Activated CD4-positive, alpha-beta T cell treated with anti-CD3 and anti-CD28 coated beads, Interleukin-2, amount 10 ng/mL, durations not matched to agents 7 days and 5 days (primary cell): ENCODE measurements at regions of chr12 and their contacts with region 1.

Region 1: DNA sequence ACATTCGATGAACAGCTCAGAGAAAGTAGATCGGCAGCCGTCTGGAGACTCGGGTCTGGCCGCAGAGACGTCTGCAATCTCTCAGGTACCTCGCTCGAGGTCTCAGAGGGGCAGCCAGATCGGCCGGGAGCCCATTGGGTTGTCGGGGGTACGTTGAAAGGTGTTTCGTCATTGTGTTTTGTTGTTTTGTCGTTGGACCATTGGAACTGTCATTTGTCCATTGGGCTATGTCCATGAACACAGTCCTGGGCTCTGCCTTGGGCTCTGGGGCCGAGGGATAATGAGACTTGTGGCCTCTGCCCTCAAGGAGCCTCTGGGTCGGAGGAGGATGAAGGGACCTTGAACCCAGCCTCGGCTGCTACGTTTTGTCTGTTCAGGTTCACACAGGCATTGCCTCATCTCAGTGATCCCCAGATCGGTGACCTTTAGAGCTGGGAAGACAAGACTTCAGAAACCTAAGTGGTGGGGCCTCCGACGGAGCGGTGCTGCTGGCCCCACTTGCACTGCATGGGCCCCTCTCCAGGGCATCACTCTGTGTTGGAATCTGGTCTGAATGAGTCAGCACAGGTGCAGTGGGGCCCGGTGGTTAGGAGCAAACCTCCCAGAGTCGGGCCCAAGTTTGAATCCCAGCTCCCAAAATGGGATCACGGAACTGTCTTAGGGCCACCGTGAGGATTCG is 23.6 kb upstream of the MLXIP start:
- DNase-seq: no peak
- H3K4me3 Mint-ChIP-seq: no peak overlapping the region
- H3K27ac Mint-ChIP-seq: no peak overlapping the region
- H3K4me1 Mint-ChIP-seq: peaks cover 7% of the 10 kb centered on the region
- H3K27me3 Mint-ChIP-seq: no peaks in the 10 kb centered on the region

Region 2: DNA sequence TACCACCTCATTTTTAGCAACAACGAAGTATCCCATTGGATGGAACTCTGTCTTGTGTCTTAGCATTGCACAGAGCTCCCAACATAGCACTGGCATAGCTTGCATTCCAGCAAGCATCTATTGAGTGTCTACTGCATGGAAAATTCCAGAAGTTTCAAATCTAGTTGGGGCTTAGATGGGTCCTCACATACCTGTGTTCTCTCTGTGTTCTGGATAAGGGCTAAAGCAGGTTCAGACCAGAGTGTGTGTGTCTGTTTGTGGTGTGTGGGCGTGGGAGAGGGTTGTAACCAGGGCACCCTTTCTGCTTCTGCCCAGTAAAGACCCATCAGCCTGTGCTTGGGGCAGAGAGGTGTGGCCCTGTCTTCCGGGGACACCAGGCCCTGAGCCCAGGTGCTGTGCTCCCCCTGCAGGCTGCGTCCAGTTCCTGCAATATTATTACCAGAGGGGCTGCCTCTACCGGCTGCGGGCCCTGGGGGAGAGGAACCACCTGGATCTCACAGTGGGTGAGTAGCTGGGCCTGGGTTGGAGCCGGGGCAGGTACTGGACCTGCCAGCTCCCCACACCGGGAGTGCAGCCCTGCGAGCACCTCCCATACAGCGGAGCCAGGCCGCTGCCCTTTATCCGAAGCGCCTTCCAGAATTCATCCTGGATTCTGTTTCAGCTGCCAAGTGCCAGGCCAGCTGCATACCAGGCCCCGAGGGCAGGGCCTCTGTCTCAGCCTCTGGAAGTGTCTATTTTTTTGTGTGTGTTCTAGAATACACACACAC is 281.8 kb before region 1 on chr12:
- CTCF ChIA-PET with region 1: no interaction called
- POLR2A ChIA-PET with region 1: no interaction called
- DNase-seq: peak; percentile 87
- H3K4me3 Mint-ChIP-seq: no peak overlapping the region
- H3K27ac Mint-ChIP-seq: peak overlapping the region; percentile 81
- H3K4me1 Mint-ChIP-seq: peaks cover 20% of the 10 kb centered on the region
- H3K27me3 Mint-ChIP-seq: no peaks in the 10 kb centered on the region

Region 3: GRCh38 chr12:122087431-122088178 is 32.6 kb after region 1 on chr12:
- CTCF ChIA-PET with region 1: interaction called, 12 read pairs
- POLR2A ChIA-PET with region 1: no interaction called
- DNase-seq: no peak
- H3K4me3 Mint-ChIP-seq: no peak overlapping the region
- H3K27ac Mint-ChIP-seq: no peak overlapping the region
- H3K4me1 Mint-ChIP-seq: peaks cover 74% of the 10 kb centered on the region
- H3K27me3 Mint-ChIP-seq: no peaks in the 10 kb centered on the region

Region 4: DNA sequence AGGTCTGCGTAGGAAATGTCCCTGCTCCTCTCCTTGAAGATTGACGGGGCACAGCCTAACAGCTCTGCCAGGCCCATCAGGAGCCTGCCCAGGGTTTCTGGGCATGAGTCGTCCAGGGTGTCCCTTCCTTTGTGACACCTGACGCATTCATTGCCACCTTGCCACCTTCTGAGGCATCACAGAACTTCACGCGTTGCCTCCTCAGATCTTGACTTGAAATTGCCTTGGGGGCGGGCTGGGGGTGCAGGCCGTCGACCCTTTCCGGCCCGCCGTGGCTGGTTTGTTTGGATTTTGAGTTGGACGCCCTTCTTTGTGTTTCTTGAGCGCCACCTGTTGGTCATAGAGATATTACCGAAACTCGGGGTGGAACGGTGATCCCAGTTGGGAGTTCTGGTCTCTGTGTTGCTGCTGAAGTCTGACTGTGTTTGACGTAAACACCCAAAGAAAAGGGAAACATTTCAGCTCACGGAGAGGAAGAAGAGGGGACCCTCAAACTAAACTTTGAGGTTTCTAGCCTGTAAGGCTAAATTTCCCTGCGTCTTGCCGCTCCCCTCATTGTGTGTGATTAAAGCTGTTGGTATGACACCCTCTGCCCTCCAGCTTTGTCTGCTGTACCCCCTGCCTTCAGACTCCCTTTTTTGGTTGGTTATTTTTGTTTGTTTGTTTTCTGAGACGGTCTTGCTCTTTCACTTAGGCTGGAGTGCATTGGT is 68.2 kb after region 1 on chr12:
- CTCF ChIA-PET with region 1: interaction called, 19 read pairs
- POLR2A ChIA-PET with region 1: interaction called, 3 read pairs
- DNase-seq: peak; percentile 82
- H3K4me3 Mint-ChIP-seq: no peak overlapping the region
- H3K27ac Mint-ChIP-seq: peak overlapping the region; percentile 47
- H3K4me1 Mint-ChIP-seq: peaks cover 25% of the 10 kb centered on the region
- H3K27me3 Mint-ChIP-seq: no peaks in the 10 kb centered on the region

Region 5: GRCh38 chr12:122190842-122191668 is 136.1 kb after region 1 on chr12:
- CTCF ChIA-PET with region 1: interaction called, 13 read pairs
- POLR2A ChIA-PET with region 1: no interaction called
- DNase-seq: peak; percentile 79
- H3K4me3 Mint-ChIP-seq: no peak overlapping the region
- H3K27ac Mint-ChIP-seq: no peak overlapping the region
- H3K4me1 Mint-ChIP-seq: no peaks in the 10 kb centered on the region
- H3K27me3 Mint-ChIP-seq: peaks cover 13% of the 10 kb centered on the region